Activated CD4-positive, alpha-beta memory T cell treated with anti-CD3 and anti-CD28 coated beads, Interleukin-2, amount 10 ng/mL, durations not matched to agents 7 days and 5 days (primary cell): ENCODE measurements at regions of chr3 and their contacts with region 1.

Region 1: DNA sequence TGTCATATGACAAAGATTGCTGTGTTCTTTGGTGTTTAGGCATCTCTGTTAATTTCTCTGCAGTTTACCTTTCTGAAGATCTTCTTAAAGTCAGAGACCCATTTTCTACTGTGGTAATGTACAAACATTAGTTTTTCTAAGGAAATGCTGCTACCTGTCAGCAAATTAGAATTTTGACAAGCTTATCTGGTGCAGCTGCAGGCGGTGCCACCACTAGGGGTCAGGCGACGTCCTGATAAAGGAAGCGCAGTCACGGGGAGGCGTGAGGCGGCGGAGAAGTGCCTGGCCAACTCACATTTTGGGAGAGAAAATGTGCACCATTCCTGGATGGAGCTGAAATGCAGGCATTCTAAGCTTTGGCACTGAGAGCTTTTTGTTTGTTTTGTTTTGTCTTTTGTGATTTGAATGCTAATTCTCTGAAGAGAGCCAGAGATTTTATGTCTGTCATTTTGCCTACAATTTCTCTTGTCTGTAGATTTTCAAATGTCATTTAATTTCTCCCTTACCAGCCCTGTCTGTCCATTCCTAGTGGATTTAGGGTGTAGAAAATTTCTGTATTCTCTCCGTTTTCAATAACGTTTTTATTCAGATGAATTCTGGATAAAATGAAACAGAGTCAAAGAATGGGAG is 24.9 kb upstream of the SIAH2 start:
- DNase-seq: peak; percentile 82
- H3K4me3 Mint-ChIP-seq: no peak overlapping the region
- H3K27ac Mint-ChIP-seq: no peak overlapping the region
- H3K4me1 Mint-ChIP-seq: peaks cover 42% of the 10 kb centered on the region
- H3K27me3 Mint-ChIP-seq: peaks cover 2% of the 10 kb centered on the region

Region 2: GRCh38 chr3:150721285-150722130 is 66.3 kb before region 1 on chr3:
- CTCF ChIA-PET with region 1: interaction called, 15 read pairs
- POLR2A ChIA-PET with region 1: no interaction called
- DNase-seq: no peak
- H3K4me3 Mint-ChIP-seq: no peak overlapping the region
- H3K27ac Mint-ChIP-seq: no peak overlapping the region
- H3K4me1 Mint-ChIP-seq: peaks cover 32% of the 10 kb centered on the region
- H3K27me3 Mint-ChIP-seq: no peaks in the 10 kb centered on the region

Region 3: GRCh38 chr3:150798122-150798626 is 10.3 kb after region 1 on chr3:
- CTCF ChIA-PET with region 1: interaction called, 10 read pairs
- POLR2A ChIA-PET with region 1: no interaction called
- DNase-seq: no peak
- H3K4me3 Mint-ChIP-seq: no peak overlapping the region
- H3K27ac Mint-ChIP-seq: no peak overlapping the region
- H3K4me1 Mint-ChIP-seq: peaks cover 10% of the 10 kb centered on the region
- H3K27me3 Mint-ChIP-seq: peaks cover 5% of the 10 kb centered on the region

Region 4: DNA sequence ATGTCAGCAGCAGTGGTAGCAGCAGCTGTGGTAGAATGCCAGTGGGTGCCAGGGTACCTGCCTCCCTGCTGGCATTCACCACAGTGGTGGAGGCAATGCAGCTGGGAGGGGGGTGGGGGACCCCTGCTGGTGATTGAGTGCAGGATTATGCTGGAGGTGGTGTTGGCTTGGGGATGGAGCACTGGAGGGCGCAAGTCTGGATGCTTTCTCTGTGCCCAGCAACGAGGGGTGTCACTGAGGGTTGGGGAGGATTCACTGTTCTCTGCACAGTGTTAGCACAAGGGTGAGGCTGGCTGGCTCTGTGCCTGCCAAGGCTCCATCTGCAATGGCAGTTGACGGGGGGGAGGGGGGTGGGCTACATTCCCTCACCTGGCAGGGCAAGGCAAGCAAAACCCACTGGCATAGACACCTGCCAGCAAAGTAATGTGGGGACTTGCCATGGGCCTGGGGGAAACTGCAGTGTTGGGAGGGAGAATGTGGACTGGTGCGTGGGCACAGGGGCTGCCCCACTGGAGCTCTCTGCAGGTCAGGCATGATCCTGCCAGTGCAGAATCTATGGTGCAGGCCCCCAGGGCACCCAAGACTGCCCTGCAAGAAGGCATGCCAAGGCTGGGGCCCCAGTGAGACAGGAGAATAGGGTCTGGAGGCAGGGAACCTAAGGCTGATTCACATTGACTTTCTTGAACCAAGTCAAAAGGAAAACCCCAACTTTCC is 53.1 kb after region 1 on chr3:
- CTCF ChIA-PET with region 1: interaction called, 15 read pairs
- POLR2A ChIA-PET with region 1: no interaction called
- DNase-seq: no peak
- H3K4me3 Mint-ChIP-seq: no peak overlapping the region
- H3K27ac Mint-ChIP-seq: no peak overlapping the region
- H3K4me1 Mint-ChIP-seq: no peaks in the 10 kb centered on the region
- H3K27me3 Mint-ChIP-seq: peaks cover 29% of the 10 kb centered on the region

Region 5: GRCh38 chr3:150870396-150870795 is 82.5 kb after region 1 on chr3:
- CTCF ChIA-PET with region 1: interaction called, 12 read pairs
- POLR2A ChIA-PET with region 1: no interaction called
- DNase-seq: no peak
- H3K4me3 Mint-ChIP-seq: no peak overlapping the region
- H3K27ac Mint-ChIP-seq: no peak overlapping the region
- H3K4me1 Mint-ChIP-seq: peaks cover 6% of the 10 kb centered on the region
- H3K27me3 Mint-ChIP-seq: peaks cover 4% of the 10 kb centered on the region